Esophagus muscularis mucosa (tissue), 4 donors: ENCODE measurements at regions of chr7 and their contacts with region 1.

Region 1: DNA sequence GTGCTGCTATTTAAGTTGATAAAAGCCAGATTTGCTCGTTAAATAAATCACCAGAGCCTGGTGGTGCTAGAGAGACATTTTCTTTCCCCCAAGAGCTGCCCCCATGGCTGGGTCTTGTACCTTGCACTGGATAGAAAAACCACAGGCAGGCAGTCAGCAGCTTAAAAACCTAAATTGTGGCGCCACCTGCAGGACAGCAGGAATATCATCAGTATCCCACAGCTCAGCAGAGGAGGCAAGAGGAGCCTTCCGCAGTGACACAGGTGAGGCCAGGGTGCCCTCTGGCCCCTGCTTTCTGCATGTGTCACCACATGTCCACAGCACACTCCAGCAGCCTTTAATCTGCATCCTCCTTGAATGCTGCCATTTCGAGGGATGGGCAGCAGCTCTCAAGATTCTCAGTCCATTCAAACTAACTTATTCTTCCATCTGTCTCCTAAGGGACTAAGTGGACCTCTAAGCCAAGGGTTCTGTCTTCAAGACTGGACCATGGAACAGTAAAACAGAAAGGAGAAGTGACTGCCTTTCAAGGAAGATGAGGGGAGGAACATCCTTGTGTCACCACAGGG is 4.5 kb upstream of the PLXNA4 start:
- DNase-seq: no peak
- H3K4me3 ChIP-seq: no peak overlapping the region
- H3K27ac ChIP-seq: no peak overlapping the region
- H3K4me1 ChIP-seq: peaks cover 5 to 17% (median 15%) of the 10 kb centered on the region in 4 donors
- H3K27me3 ChIP-seq: peaks cover 0 to 15% (median 0%) of the 10 kb centered on the region in 4 donors
- CTCF ChIP-seq: peak; percentile 73 to 77 (median 75)
- EP300 ChIP-seq: no peak
- POLR2A ChIP-seq: no peak

Region 2: DNA sequence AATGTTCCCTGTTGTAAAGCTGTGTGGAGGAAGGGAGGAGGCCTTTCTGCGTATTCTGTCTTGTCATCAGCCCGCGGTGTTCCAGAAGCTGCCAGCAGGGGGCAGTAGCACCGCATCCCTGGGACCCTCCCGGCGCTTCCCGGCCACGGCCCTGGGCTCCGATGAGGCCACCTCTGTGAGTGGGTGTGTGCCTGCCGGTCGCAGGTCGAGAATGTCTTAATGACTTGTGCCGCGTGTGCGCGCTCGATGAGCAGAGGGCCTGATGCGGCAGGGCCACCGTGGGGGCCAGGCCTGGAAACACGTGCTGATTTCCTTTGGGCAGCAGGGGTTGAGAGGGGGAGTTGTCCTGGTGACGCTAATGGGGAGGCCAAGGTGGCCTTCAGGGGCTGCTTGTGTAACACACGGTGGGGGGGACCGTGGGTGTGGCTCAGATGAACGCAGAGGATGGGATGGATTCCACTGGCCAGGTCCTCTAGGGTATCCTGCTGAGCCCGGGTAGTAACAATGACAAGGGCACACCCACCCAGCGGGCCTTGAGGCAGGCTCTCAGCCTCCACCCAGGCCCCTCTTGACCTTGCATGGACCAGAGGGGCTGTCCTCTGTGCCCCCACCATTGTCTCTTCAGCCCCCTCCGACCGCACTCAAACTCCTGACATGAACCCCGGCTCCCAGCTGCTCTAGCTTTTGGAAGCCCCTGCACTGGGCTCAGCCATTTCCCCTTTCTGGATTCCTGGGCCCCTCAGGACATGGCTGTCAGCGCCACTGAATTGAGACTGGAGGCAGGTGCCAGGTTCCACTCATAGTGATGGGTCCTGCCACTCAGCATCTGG is 888.5 kb before region 1 on chr7:
- intact Hi-C with region 1: loop called (anchors 5 kb)
- DNase-seq: peak; percentile 91
- H3K4me3 ChIP-seq: peak overlapping the region in 1 of 4 donors; percentile 7
- H3K27ac ChIP-seq: no peak overlapping the region
- H3K4me1 ChIP-seq: peaks cover 10 to 16% (median 11%) of the 10 kb centered on the region in 4 donors
- H3K27me3 ChIP-seq: peaks cover 0 to 58% (median 0%) of the 10 kb centered on the region in 4 donors
- CTCF ChIP-seq: peak; percentile 58 to 88 (median 66)
- EP300 ChIP-seq: no peak
- POLR2A ChIP-seq: no peak

Region 3: DNA sequence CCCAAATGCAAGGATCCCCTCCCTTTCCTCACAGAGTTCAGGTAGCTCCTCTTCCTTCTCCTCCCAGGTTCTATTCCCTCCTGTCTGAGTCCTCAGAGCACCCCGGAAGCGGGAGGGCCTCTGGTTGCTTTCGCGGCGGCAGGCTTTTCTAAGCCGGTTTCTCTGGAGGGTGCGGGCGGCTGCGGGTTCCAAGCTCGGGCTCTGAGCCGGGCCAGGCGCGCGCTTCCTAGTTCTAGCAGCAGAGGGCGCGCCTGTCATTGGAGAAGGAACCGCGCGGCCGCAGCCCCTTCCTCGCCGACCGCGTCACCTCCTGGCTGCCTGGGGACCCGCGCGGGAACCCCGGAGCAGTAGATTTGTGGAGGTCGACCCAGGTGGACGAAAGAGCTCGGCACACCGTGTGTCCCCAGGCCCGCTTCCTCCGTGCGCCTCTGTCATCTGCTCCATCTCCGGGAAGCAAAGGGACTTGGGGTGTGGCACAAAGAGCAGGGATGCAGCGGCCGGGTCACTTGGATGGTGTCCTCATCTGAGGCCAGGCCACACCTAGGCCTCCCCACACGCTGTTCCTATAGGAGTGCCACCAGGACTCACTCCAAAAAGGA is 635.4 kb before region 1 on chr7:
- intact Hi-C with region 1: loop called (anchors 5 kb)
- DNase-seq: no peak
- H3K4me3 ChIP-seq: peak overlapping the region; percentile 30 to 57 (median 46)
- H3K27ac ChIP-seq: no peak overlapping the region
- H3K4me1 ChIP-seq: peaks cover 18 to 45% (median 43%) of the 10 kb centered on the region in 4 donors
- H3K27me3 ChIP-seq: peaks cover 0 to 13% (median 0%) of the 10 kb centered on the region in 4 donors
- CTCF ChIP-seq: peak; percentile 79 to 99 (median 89)
- EP300 ChIP-seq: no peak
- POLR2A ChIP-seq: no peak

Region 4: GRCh38 chr7:132318352-132319318 is 262.2 kb before region 1 on chr7:
- intact Hi-C with region 1: loop called (anchors 1 kb)
- DNase-seq: no peak
- H3K4me3 ChIP-seq: peak overlapping the region in 2 of 4 donors; percentile 15 to 27
- H3K27ac ChIP-seq: no peak overlapping the region
- H3K4me1 ChIP-seq: peaks cover 10 to 19% (median 12%) of the 10 kb centered on the region in 4 donors
- H3K27me3 ChIP-seq: peaks cover 0 to 21% (median 0%) of the 10 kb centered on the region in 4 donors
- CTCF ChIP-seq: peak; percentile 87 to 94 (median 88)
- EP300 ChIP-seq: no peak
- POLR2A ChIP-seq: no peak

Region 5: GRCh38 chr7:132402751-132403245 is 178.0 kb before region 1 on chr7:
- intact Hi-C with region 1: no loop called
- DNase-seq: no peak
- H3K4me3 ChIP-seq: peak overlapping the region in 1 of 4 donors; percentile 13
- H3K27ac ChIP-seq: peak overlapping the region; percentile 70 to 84 (median 78)
- H3K4me1 ChIP-seq: peaks cover 44 to 66% (median 62%) of the 10 kb centered on the region in 4 donors
- H3K27me3 ChIP-seq: no peaks in the 10 kb centered on the region
- CTCF ChIP-seq: no peak
- EP300 ChIP-seq: peak; percentile 51
- POLR2A ChIP-seq: no peak

Region 6: DNA sequence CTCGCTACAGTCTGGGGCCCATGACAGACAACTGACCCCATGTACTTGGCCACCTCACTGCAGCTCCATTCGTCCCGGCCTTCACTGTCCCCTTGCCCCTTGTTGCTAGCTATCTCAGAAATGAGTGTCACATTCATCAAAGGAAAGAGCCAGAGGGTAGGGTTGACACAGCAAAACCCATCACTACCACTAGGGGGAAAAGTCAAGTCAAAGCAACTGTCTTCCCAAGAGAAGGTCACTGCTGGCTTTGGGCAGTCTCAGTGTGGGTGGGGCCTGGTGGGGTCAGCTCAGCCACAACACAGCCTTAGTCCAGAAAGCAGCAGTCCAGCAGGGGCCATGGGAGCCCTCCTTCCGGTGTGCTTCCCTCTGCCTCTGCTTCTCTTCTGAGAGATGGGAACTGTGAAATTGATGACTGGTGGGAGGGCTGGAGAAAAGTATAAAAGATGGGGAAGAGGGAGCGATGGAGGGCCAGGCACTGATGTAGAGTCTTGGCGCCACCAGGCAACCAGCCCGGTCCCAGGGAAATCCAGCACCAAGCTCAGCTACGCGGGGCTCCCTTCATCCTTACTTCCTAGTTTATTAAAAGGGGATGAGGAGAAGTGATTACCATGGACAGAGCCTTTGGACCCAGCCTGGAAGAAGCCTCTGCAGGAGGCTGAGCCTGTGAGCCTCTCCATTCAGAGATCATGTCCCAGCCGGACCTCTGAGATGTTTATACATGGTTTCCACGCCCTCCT is 62.5 kb before region 1 on chr7:
- intact Hi-C with region 1: loop called (anchors 5 kb)
- DNase-seq: no peak
- H3K4me3 ChIP-seq: no peak overlapping the region
- H3K27ac ChIP-seq: no peak overlapping the region
- H3K4me1 ChIP-seq: peaks cover 16 to 38% (median 29%) of the 10 kb centered on the region in 4 donors
- H3K27me3 ChIP-seq: no peaks in the 10 kb centered on the region
- CTCF ChIP-seq: peak in 1 of 3 experiments; percentile 37
- EP300 ChIP-seq: no peak
- POLR2A ChIP-seq: no peak

Region 7: GRCh38 chr7:132650503-132650902 is 69.7 kb after region 1 on chr7:
- intact Hi-C with region 1: no loop called
- DNase-seq: no peak
- H3K4me3 ChIP-seq: no peak overlapping the region
- H3K27ac ChIP-seq: no peak overlapping the region
- H3K4me1 ChIP-seq: peaks cover 0 to 10% (median 3%) of the 10 kb centered on the region in 4 donors
- H3K27me3 ChIP-seq: peaks cover 0 to 10% (median 0%) of the 10 kb centered on the region in 4 donors
- CTCF ChIP-seq: no peak
- EP300 ChIP-seq: no peak
- POLR2A ChIP-seq: no peak